ENCODE measurements at regions of chr6 and their contacts with region 1.

Region 1: GRCh38 chr6:43129434-43130194 is 41.5 kb upstream of the SRF start:
- DNase-seq: peak in 1 of 2 experiments; percentile 63
- H3K4me3 ChIP-seq: no peak overlapping the region
- H3K27ac ChIP-seq: no peak overlapping the region
- H3K4me1 ChIP-seq: peaks cover 0 to 14% (median 5%) of the 10 kb centered on the region in 4 experiments
- H3K27me3 ChIP-seq: no peaks in the 10 kb centered on the region
- CTCF ChIP-seq: peak; percentile 72 to 82 (median 80)
- EP300 ChIP-seq: no peak
- POLR2A ChIP-seq: no peak
- RAD21 ChIP-seq: peak; percentile 91 to 92

Region 2: GRCh38 chr6:42659806-42660205 is 469.8 kb before region 1 on chr6:
- CTCF ChIA-PET with region 1: no interaction called
- POLR2A ChIA-PET with region 1: no interaction called
- DNase-seq: no peak
- H3K4me3 ChIP-seq: no peak overlapping the region
- H3K27ac ChIP-seq: no peak overlapping the region
- H3K4me1 ChIP-seq: no peaks in the 10 kb centered on the region
- H3K27me3 ChIP-seq: no peaks in the 10 kb centered on the region
- CTCF ChIP-seq: no peak
- EP300 ChIP-seq: no peak
- POLR2A ChIP-seq: no peak
- RAD21 ChIP-seq: no peak

Region 3: GRCh38 chr6:43070028-43070632 is 59.5 kb before region 1 on chr6:
- CTCF ChIA-PET with region 1: interaction called, 29 read pairs
- POLR2A ChIA-PET with region 1: interaction called, 4 read pairs
- DNase-seq: no peak
- H3K4me3 ChIP-seq: no peak overlapping the region
- H3K27ac ChIP-seq: no peak overlapping the region
- H3K4me1 ChIP-seq: peaks cover 0 to 8% (median 3%) of the 10 kb centered on the region in 4 experiments; a peak in 4 of 7 replicates
- H3K27me3 ChIP-seq: no peaks in the 10 kb centered on the region
- CTCF ChIP-seq: peak; percentile 25 to 73 (median 48)
- EP300 ChIP-seq: no peak
- POLR2A ChIP-seq: no peak
- RAD21 ChIP-seq: peak; percentile 81

Region 4: GRCh38 chr6:43089874-43090558 is 39.6 kb before region 1 on chr6:
- CTCF ChIA-PET with region 1: interaction called, 19 read pairs
- POLR2A ChIA-PET with region 1: interaction called, 5 read pairs
- DNase-seq: peak in 1 of 2 experiments; percentile 57
- H3K4me3 ChIP-seq: peak overlapping the region; percentile 19 to 46 (median 31); a peak in 7 of 8 replicates
- H3K27ac ChIP-seq: peak overlapping the region; percentile 81
- H3K4me1 ChIP-seq: peaks cover 18 to 33% (median 26%) of the 10 kb centered on the region in 4 experiments
- H3K27me3 ChIP-seq: no peaks in the 10 kb centered on the region
- CTCF ChIP-seq: no peak
- EP300 ChIP-seq: no peak
- POLR2A ChIP-seq: no peak
- RAD21 ChIP-seq: no peak

Region 5: GRCh38 chr6:43113431-43114260 is 16.0 kb before region 1 on chr6:
- CTCF ChIA-PET with region 1: interaction called, 15 read pairs
- POLR2A ChIA-PET with region 1: interaction called, 3 read pairs
- DNase-seq: no peak
- H3K4me3 ChIP-seq: no peak overlapping the region
- H3K27ac ChIP-seq: peak overlapping the region; percentile 37; the same call in 1 of the 2 replicates
- H3K4me1 ChIP-seq: peaks cover 3 to 11% (median 5%) of the 10 kb centered on the region in 4 experiments; a peak in 6 of 7 replicates
- H3K27me3 ChIP-seq: no peaks in the 10 kb centered on the region
- CTCF ChIP-seq: no peak
- EP300 ChIP-seq: no peak
- POLR2A ChIP-seq: no peak
- RAD21 ChIP-seq: no peak